ENCODE measurements at regions of chr12 and their contacts with region 1.

Region 1: GRCh38 chr12:47216150-47216677 is 136.5 kb upstream of the AMIGO2 start:
- DNase-seq: peak; percentile 28 to 92 (median 73)
- ATAC-seq: peak; percentile 46
- H3K4me3 ChIP-seq: peak overlapping the region; percentile 75 to 80
- H3K4me3 Mint-ChIP-seq: peak overlapping the region; percentile 95
- H3K27ac ChIP-seq: peak overlapping the region; percentile 74 to 81
- H3K27ac Mint-ChIP-seq: peak overlapping the region; percentile 96
- H3K4me1 ChIP-seq: peaks cover 5% of the 10 kb centered on the region
- H3K4me1 Mint-ChIP-seq: peaks cover 30% of the 10 kb centered on the region
- H3K27me3 ChIP-seq: no peaks in the 10 kb centered on the region
- H3K27me3 Mint-ChIP-seq: no peaks in the 10 kb centered on the region
- CTCF ChIP-seq: no peak

Region 2: GRCh38 chr12:46268590-46269558 is 947.3 kb before region 1 on chr12 and contains the start of gene SLC38A1:
- CTCF ChIA-PET with region 1: no interaction called
- POLR2A ChIA-PET with region 1: interaction called, 17 read pairs
- intact Hi-C with region 1: loop called in 1 of 2 experiments (anchors 10 kb)
- DNase-seq: peak; percentile 74 to 96 (median 91)
- ATAC-seq: peak; percentile 56
- H3K4me3 ChIP-seq: peak within 1 kb of the TSS; percentile 92 to 96
- H3K4me3 Mint-ChIP-seq: no peak within 1 kb of the TSS
- H3K27ac ChIP-seq: peak within 1 kb of the TSS; percentile 96 to 98
- H3K27ac Mint-ChIP-seq: no peak within 1 kb of the TSS
- H3K4me1 ChIP-seq: peaks cover 54% of the 10 kb centered on the region
- H3K4me1 Mint-ChIP-seq: peaks cover 41% of the 10 kb centered on the region
- H3K27me3 ChIP-seq: no peaks in the 10 kb centered on the region
- H3K27me3 Mint-ChIP-seq: no peaks in the 10 kb centered on the region
- CTCF ChIP-seq: no peak
- total RNA-seq, gene SLC38A1: 440 to 464 TPM

Region 3: DNA sequence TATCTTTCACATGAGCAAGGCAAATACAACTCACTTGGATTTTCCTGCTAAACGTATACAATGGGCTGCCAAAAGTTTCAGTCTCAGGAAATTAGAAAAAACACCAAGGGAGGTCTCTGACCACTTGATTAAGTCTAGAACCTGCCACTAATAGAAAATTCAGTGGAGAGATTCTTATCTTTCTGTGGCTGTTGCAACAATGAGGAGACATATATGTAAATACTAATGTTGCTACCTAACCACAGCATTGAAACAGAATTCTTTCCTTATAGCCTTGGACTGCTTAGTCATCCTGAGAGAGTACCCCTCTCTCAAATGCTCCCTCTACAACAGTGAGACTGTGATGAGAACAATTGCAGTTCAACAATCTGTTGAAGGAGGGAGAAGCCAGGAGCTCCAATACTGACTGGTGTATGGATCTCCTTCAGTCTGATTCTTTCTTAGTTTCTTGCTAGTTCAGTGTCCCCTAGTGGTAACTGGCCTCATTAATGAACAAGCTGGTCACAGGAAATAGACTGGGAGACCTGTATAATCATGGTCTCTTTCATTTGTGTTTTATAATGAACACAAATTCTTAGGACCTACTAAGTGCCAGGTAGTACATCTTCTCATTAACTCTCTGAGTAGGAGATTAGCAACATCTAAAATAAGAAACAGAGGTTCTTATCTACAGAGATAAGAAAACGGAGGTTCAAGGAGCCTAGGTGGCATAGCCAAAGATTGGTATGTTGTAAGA is 554.9 kb before region 1 on chr12:
- CTCF ChIA-PET with region 1: no interaction called
- POLR2A ChIA-PET with region 1: no interaction called
- intact Hi-C with region 1: no loop called
- DNase-seq: peak in 2 of 9 experiments; percentile 60 to 72
- ATAC-seq: peak; percentile 69
- H3K4me3 ChIP-seq: no peak overlapping the region
- H3K4me3 Mint-ChIP-seq: no peak overlapping the region
- H3K27ac ChIP-seq: no peak overlapping the region
- H3K27ac Mint-ChIP-seq: no peak overlapping the region
- H3K4me1 ChIP-seq: peaks cover 6% of the 10 kb centered on the region
- H3K4me1 Mint-ChIP-seq: peaks cover 28% of the 10 kb centered on the region
- H3K27me3 ChIP-seq: no peaks in the 10 kb centered on the region
- H3K27me3 Mint-ChIP-seq: no peaks in the 10 kb centered on the region
- CTCF ChIP-seq: peak; percentile 61

Region 4: GRCh38 chr12:46855760-46856159 is 360.5 kb before region 1 on chr12:
- CTCF ChIA-PET with region 1: no interaction called
- POLR2A ChIA-PET with region 1: no interaction called
- intact Hi-C with region 1: no loop called
- DNase-seq: no peak
- ATAC-seq: no peak
- H3K4me3 ChIP-seq: no peak overlapping the region
- H3K4me3 Mint-ChIP-seq: no peak overlapping the region
- H3K27ac ChIP-seq: no peak overlapping the region
- H3K27ac Mint-ChIP-seq: no peak overlapping the region
- H3K4me1 ChIP-seq: no peaks in the 10 kb centered on the region
- H3K4me1 Mint-ChIP-seq: no peaks in the 10 kb centered on the region
- H3K27me3 ChIP-seq: no peaks in the 10 kb centered on the region
- H3K27me3 Mint-ChIP-seq: no peaks in the 10 kb centered on the region
- CTCF ChIP-seq: no peak

Region 5: DNA sequence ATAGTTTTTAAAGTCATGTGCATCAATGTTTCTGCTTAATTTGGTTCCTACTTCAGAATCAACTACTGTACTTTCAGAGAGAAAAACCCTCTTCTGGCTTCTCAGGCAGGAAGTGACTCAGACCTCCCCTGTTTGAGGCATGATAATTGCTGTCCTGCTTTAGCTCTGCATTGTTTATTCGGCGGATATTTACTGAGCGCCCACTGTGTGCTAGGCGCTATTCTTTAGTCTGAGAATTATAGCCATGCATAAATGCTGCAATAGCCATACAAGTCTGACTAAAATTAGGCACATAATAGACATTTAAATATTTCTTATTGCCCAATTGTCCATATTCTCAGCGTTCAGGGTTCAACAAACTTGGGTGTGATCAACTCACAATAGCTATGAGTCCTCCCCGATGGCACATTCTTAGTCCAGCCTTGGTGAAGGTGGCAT is 130.4 kb before region 1 on chr12:
- CTCF ChIA-PET with region 1: interaction called, 4 read pairs
- POLR2A ChIA-PET with region 1: interaction called, 55 read pairs
- intact Hi-C with region 1: loop called (anchors 2 to 5 kb)
- DNase-seq: peak in 7 of 9 experiments; percentile 34 to 81 (median 44)
- ATAC-seq: peak; percentile 88
- H3K4me3 ChIP-seq: no peak overlapping the region
- H3K4me3 Mint-ChIP-seq: peak overlapping the region; percentile 3
- H3K27ac ChIP-seq: peak overlapping the region in 1 of 2 experiments; percentile 63
- H3K27ac Mint-ChIP-seq: peak overlapping the region; percentile 49
- H3K4me1 ChIP-seq: peaks cover 50% of the 10 kb centered on the region
- H3K4me1 Mint-ChIP-seq: peaks cover 67% of the 10 kb centered on the region
- H3K27me3 ChIP-seq: no peaks in the 10 kb centered on the region
- H3K27me3 Mint-ChIP-seq: no peaks in the 10 kb centered on the region
- CTCF ChIP-seq: no peak

Region 6: GRCh38 chr12:47135578-47135977 is 80.6 kb before region 1 on chr12:
- CTCF ChIA-PET with region 1: no interaction called
- POLR2A ChIA-PET with region 1: no interaction called
- intact Hi-C with region 1: no loop called
- DNase-seq: no peak
- ATAC-seq: no peak
- H3K4me3 ChIP-seq: no peak overlapping the region
- H3K4me3 Mint-ChIP-seq: no peak overlapping the region
- H3K27ac ChIP-seq: no peak overlapping the region
- H3K27ac Mint-ChIP-seq: peak overlapping the region; percentile 15
- H3K4me1 ChIP-seq: no peaks in the 10 kb centered on the region
- H3K4me1 Mint-ChIP-seq: peaks cover 11% of the 10 kb centered on the region
- H3K27me3 ChIP-seq: no peaks in the 10 kb centered on the region
- H3K27me3 Mint-ChIP-seq: no peaks in the 10 kb centered on the region
- CTCF ChIP-seq: no peak

Region 7: GRCh38 chr12:47307680-47308399 is 91.6 kb after region 1 on chr12:
- CTCF ChIA-PET with region 1: interaction called, 11 read pairs
- POLR2A ChIA-PET with region 1: interaction called, 19 read pairs
- intact Hi-C with region 1: loop called (anchors 2 to 5 kb)
- DNase-seq: peak; percentile 21 to 81 (median 56)
- ATAC-seq: peak; percentile 91
- H3K4me3 ChIP-seq: peak overlapping the region; percentile 37 to 46
- H3K4me3 Mint-ChIP-seq: peak overlapping the region; percentile 81
- H3K27ac ChIP-seq: peak overlapping the region; percentile 21 to 25
- H3K27ac Mint-ChIP-seq: peak overlapping the region; percentile 88
- H3K4me1 ChIP-seq: peaks cover 12% of the 10 kb centered on the region
- H3K4me1 Mint-ChIP-seq: peaks cover 47% of the 10 kb centered on the region
- H3K27me3 ChIP-seq: no peaks in the 10 kb centered on the region
- H3K27me3 Mint-ChIP-seq: no peaks in the 10 kb centered on the region
- CTCF ChIP-seq: peak; percentile 60

Region 8: GRCh38 chr12:47397664-47398281 is 181.6 kb after region 1 on chr12:
- CTCF ChIA-PET with region 1: interaction called, 16 read pairs
- POLR2A ChIA-PET with region 1: interaction called, 47 read pairs
- intact Hi-C with region 1: loop called (anchors 2 to 5 kb)
- DNase-seq: peak in 5 of 9 experiments; percentile 35 to 80 (median 50)
- ATAC-seq: peak; percentile 82
- H3K4me3 ChIP-seq: no peak overlapping the region
- H3K4me3 Mint-ChIP-seq: no peak overlapping the region
- H3K27ac ChIP-seq: peak overlapping the region in 1 of 2 experiments; percentile 44
- H3K27ac Mint-ChIP-seq: peak overlapping the region; percentile 84
- H3K4me1 ChIP-seq: peaks cover 43% of the 10 kb centered on the region
- H3K4me1 Mint-ChIP-seq: peaks cover 58% of the 10 kb centered on the region
- H3K27me3 ChIP-seq: no peaks in the 10 kb centered on the region
- H3K27me3 Mint-ChIP-seq: no peaks in the 10 kb centered on the region
- CTCF ChIP-seq: peak; percentile 74